B cell (primary cell): ENCODE measurements at regions of chr12 and their contacts with region 1.

Region 1: DNA sequence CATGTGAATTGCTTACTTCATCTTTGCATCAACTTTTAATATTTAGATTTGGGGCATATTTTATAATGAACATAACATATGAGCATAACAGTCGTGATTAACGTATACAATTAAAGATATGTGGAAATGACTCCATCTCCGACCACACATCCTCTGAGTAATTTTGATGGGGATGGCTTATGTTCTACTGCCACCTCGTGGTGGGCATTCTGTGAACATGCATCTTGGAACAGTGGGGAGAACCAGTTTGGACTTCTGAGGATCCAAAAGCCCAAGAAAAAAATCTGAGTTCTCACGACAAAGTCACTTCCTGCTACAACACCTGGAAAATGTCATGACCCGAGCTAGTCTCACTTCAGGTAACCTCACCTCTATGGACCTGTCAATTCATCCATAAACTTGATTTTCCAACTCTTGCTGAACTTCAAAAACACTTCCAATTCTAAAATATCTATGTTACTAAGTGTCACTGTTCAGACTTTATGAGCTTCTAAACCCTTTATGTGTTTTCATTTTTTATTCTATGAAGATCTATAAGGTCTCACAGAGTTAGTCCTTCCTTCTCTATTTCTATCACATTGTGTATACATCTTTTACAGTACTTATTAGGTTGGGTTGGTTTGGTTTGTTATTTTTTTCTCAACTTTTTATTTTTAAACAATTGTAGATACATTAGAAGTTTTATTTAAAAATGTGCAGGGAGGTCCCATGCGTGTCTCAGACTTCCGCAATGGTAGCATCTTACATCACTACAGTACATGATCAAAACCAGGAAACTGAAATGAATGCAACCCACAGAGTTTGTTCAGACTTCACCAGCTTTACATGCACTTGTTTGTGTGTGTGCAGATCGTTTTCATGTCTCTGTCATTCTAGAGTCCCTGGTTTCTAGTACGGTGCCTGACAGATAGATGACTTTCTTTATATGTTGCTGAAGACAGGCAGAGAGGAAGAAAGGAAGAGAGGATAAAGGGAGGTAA is 38.2 kb upstream of the STAB2 start:
- DNase-seq: peak; percentile 81
- ATAC-seq: peak; percentile 62
- H3K4me3 ChIP-seq: no peak overlapping the region
- H3K4me3 Mint-ChIP-seq: no peak overlapping the region
- H3K27ac ChIP-seq: no peak overlapping the region
- H3K27ac Mint-ChIP-seq: no peak overlapping the region
- H3K4me1 ChIP-seq: no peaks in the 10 kb centered on the region
- H3K4me1 Mint-ChIP-seq: peaks cover 9% of the 10 kb centered on the region
- H3K27me3 ChIP-seq: peaks cover 0 to 4% (median 0%) of the 10 kb centered on the region in 4 experiments
- H3K27me3 Mint-ChIP-seq: peaks cover 14% of the 10 kb centered on the region
- CTCF ChIP-seq: peak; percentile 98

Region 2: DNA sequence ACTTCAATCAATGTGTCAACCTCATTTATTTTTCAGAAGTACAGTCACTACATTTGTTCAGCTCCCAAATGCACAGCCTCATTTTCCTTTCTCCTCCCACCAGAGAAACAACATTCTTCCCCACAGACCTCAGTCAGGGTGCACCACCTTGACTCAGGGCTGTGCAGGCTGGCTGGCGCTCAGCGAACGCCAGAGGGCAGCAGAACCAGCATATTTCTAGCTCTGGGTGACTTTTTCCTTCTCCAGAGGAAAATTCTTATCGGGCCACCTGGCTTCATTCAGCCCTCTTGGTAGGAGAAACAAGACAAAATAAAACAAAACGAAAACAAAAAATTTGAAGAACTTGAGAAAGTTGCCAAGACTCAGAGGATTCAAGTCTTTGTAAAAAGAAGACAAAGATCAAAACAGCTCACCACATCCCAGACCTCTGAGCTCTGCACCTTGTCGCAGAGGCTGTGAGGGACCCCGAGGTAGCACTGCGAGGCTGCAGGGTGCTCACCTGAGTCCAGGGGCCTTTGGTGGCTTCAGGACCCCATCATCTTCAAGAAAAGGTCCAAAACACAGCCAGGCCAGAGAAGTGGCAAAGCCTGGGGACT is 665.6 kb before region 1 on chr12:
- CTCF ChIA-PET with region 1: interaction called, 186 read pairs
- POLR2A ChIA-PET with region 1: no interaction called
- intact Hi-C with region 1: loop called (anchors 1 kb)
- DNase-seq: peak; percentile 53
- ATAC-seq: peak; percentile 54
- H3K4me3 ChIP-seq: no peak overlapping the region
- H3K4me3 Mint-ChIP-seq: no peak overlapping the region
- H3K27ac ChIP-seq: no peak overlapping the region
- H3K27ac Mint-ChIP-seq: no peak overlapping the region
- H3K4me1 ChIP-seq: peaks cover 0 to 3% of the 10 kb centered on the region in 2 donors
- H3K4me1 Mint-ChIP-seq: peaks cover 4% of the 10 kb centered on the region
- H3K27me3 ChIP-seq: peaks cover 0 to 6% (median 2%) of the 10 kb centered on the region in 4 experiments
- H3K27me3 Mint-ChIP-seq: peaks cover 38% of the 10 kb centered on the region
- CTCF ChIP-seq: peak; percentile 88

Region 3: GRCh38 chr12:102948941-102949352 is 600.0 kb before region 1 on chr12:
- CTCF ChIA-PET with region 1: interaction called, 260 read pairs
- POLR2A ChIA-PET with region 1: no interaction called
- intact Hi-C with region 1: loop called (anchors 1 kb)
- DNase-seq: peak; percentile 72
- ATAC-seq: peak; percentile 57
- H3K4me3 ChIP-seq: no peak overlapping the region
- H3K4me3 Mint-ChIP-seq: no peak overlapping the region
- H3K27ac ChIP-seq: no peak overlapping the region
- H3K27ac Mint-ChIP-seq: no peak overlapping the region
- H3K4me1 ChIP-seq: peaks cover 10 to 13% of the 10 kb centered on the region in 2 donors
- H3K4me1 Mint-ChIP-seq: peaks cover 9% of the 10 kb centered on the region
- H3K27me3 ChIP-seq: peaks cover 0 to 41% (median 24%) of the 10 kb centered on the region in 4 experiments
- H3K27me3 Mint-ChIP-seq: peaks cover 57% of the 10 kb centered on the region
- CTCF ChIP-seq: peak; percentile 99

Region 4: GRCh38 chr12:103326190-103326589 is 222.7 kb before region 1 on chr12:
- CTCF ChIA-PET with region 1: interaction called, 11 read pairs
- POLR2A ChIA-PET with region 1: no interaction called
- intact Hi-C with region 1: loop called (anchors 1 kb)
- DNase-seq: peak; percentile 36
- ATAC-seq: no peak
- H3K4me3 ChIP-seq: no peak overlapping the region
- H3K4me3 Mint-ChIP-seq: no peak overlapping the region
- H3K27ac ChIP-seq: no peak overlapping the region
- H3K27ac Mint-ChIP-seq: no peak overlapping the region
- H3K4me1 ChIP-seq: no peaks in the 10 kb centered on the region
- H3K4me1 Mint-ChIP-seq: no peaks in the 10 kb centered on the region
- H3K27me3 ChIP-seq: no peaks in the 10 kb centered on the region
- H3K27me3 Mint-ChIP-seq: no peaks in the 10 kb centered on the region
- CTCF ChIP-seq: peak; percentile 53

Region 5: DNA sequence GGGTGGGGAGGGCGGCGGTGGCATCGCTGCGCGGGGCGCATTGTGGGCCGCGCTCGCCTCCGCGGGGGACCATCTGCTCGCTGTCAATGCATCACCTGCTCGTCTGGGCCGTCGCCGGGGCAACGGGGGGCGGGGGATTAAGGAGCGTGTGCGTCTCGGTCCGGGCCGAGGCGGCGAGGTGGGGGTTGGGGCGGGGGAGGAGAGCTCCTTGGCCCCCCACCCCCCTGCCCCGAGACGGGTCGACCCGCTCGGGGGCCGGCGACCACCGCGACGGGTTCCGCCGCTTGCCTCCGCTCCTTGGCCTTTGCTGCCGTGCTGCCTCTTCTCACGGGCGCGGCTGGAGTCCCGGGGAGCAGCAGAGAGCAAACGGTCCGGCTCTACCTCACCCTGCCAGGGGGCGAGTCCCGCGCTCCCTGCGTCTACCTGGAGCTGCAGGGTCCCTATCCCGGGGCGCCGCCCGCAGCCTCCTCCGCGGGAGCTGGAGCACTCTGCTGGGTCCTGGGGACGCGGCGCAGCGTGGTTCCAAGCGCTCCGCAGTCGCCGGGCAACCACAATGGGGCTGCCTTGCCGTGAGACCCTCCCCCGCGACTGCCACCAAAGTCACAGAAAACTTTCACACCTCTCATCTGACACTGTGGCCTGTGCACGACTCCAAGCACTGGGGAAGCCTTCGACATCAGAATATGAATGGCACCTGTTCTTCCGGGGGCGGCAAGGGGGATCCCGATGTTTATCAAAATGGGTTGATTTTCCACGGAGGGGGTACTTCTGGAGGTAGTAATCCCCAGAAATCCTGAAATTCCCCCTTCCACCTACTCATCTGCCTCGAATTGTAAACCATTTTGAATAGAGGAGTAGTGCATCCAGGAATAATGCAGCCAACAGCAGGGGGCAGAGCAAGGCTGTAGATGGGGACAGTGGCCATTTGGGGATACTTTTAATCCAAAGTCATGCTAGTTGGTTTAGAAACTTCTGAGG is 53.1 kb before region 1 on chr12 and contains the start of gene C12orf42:
- CTCF ChIA-PET with region 1: interaction called, 85 read pairs
- POLR2A ChIA-PET with region 1: no interaction called
- intact Hi-C with region 1: loop called (anchors 1 kb)
- DNase-seq: peak; percentile 90
- ATAC-seq: peak; percentile 89
- H3K4me3 ChIP-seq: peak within 1 kb of the TSS in 4 of 5 experiments; percentile 46 to 77 (median 67)
- H3K4me3 Mint-ChIP-seq: peak within 1 kb of the TSS; percentile 83
- H3K27ac ChIP-seq: peak within 1 kb of the TSS in 1 of 2 donors; percentile 76
- H3K27ac Mint-ChIP-seq: peak within 1 kb of the TSS; percentile 83
- H3K4me1 ChIP-seq: peaks cover 16 to 18% of the 10 kb centered on the region in 2 donors
- H3K4me1 Mint-ChIP-seq: peaks cover 37% of the 10 kb centered on the region
- H3K27me3 ChIP-seq: no peaks in the 10 kb centered on the region
- H3K27me3 Mint-ChIP-seq: peaks cover 8% of the 10 kb centered on the region
- CTCF ChIP-seq: peak; percentile 66
- total RNA-seq, gene C12orf42: 136 and 138 TPM in 2 replicates

Region 6: DNA sequence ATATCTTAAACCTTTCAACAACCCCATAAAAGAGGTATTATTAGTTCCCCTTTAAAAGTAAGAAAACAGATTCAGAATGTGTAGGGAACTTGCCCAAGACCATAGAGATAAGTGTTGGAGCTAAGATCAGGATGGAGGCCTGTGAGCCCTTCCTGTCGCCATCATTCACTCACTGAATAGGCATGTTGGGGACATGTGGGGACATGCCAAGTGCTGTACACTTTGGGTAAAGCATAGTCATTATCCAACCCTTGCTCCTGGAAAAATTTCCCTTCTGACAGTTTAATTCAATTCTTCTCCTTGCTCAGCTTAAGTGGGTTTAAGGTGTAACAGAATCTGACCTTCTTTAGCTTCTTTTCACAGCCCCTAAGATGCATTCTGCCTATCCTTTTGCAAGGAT is 25.1 kb before region 1 on chr12:
- CTCF ChIA-PET with region 1: interaction called, 20 read pairs
- POLR2A ChIA-PET with region 1: no interaction called
- intact Hi-C with region 1: no loop called
- DNase-seq: no peak
- ATAC-seq: no peak
- H3K4me3 ChIP-seq: no peak overlapping the region
- H3K4me3 Mint-ChIP-seq: no peak overlapping the region
- H3K27ac ChIP-seq: no peak overlapping the region
- H3K27ac Mint-ChIP-seq: no peak overlapping the region
- H3K4me1 ChIP-seq: peaks cover 1 to 2% of the 10 kb centered on the region in 2 donors
- H3K4me1 Mint-ChIP-seq: peaks cover 7% of the 10 kb centered on the region
- H3K27me3 ChIP-seq: peaks cover 0 to 3% (median 0%) of the 10 kb centered on the region in 4 experiments
- H3K27me3 Mint-ChIP-seq: peaks cover 3% of the 10 kb centered on the region
- CTCF ChIP-seq: no peak

Region 7: GRCh38 chr12:103538397-103538796 is 10.5 kb before region 1 on chr12:
- CTCF ChIA-PET with region 1: interaction called, 26 read pairs
- POLR2A ChIA-PET with region 1: no interaction called
- intact Hi-C with region 1: no loop called
- DNase-seq: no peak
- ATAC-seq: no peak
- H3K4me3 ChIP-seq: no peak overlapping the region
- H3K4me3 Mint-ChIP-seq: no peak overlapping the region
- H3K27ac ChIP-seq: no peak overlapping the region
- H3K27ac Mint-ChIP-seq: no peak overlapping the region
- H3K4me1 ChIP-seq: no peaks in the 10 kb centered on the region
- H3K4me1 Mint-ChIP-seq: no peaks in the 10 kb centered on the region
- H3K27me3 ChIP-seq: no peaks in the 10 kb centered on the region
- H3K27me3 Mint-ChIP-seq: no peaks in the 10 kb centered on the region
- CTCF ChIP-seq: no peak

Region 8: GRCh38 chr12:103647267-103647666 is 98.4 kb after region 1 on chr12:
- CTCF ChIA-PET with region 1: no interaction called
- POLR2A ChIA-PET with region 1: no interaction called
- intact Hi-C with region 1: no loop called
- DNase-seq: no peak
- ATAC-seq: no peak
- H3K4me3 ChIP-seq: no peak overlapping the region
- H3K4me3 Mint-ChIP-seq: no peak overlapping the region
- H3K27ac ChIP-seq: no peak overlapping the region
- H3K27ac Mint-ChIP-seq: no peak overlapping the region
- H3K4me1 ChIP-seq: no peaks in the 10 kb centered on the region
- H3K4me1 Mint-ChIP-seq: no peaks in the 10 kb centered on the region
- H3K27me3 ChIP-seq: peaks cover 0 to 4% (median 2%) of the 10 kb centered on the region in 4 experiments
- H3K27me3 Mint-ChIP-seq: peaks cover 18% of the 10 kb centered on the region
- CTCF ChIP-seq: no peak